ENCODE measurements at regions of chr11 and their contacts with region 1.

Region 1: DNA sequence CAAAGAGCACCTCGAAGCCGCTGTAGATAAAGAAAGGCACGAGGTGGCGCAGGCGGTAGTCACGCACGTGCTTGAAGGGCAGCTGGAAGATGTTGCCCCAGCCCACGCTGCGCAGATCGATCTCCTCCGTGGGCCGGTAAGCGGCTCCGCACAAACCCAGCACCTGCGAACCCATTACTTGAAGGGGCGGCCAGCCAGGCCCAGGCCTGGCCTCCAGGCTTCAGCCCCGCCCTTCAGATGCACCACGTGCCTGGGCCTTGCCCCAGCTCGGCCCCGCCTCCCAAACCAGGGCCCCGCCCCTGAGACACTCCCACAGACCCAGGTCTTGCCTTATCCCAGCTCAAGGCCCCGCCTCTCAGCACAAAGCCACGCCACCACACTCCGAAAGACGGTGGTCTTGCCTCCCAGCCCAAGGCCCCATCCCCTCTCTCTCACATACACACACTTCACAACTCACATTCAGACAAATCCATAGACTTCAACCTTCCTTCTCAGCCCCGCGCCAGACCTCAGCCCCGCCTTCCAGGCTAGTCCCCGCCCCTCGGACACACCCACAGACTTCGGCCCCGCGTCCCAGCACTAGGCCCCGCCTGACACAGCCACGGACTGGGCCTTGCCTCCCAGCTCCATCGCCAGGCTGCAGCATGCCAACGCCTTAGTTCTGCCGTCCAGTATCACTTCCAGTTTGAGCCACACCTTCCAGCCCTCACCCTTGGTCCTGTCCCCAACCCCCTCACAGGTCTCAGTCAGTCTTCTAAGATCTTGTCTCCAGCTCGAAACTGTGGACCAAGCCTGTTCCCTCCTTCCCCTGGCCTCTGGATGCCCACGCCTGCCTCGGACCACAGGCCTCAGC is 7.0 kb downstream of the UNC93B1 start:
- H3K4me3 Mint-ChIP-seq: peak overlapping the region; percentile 51
- H3K27ac Mint-ChIP-seq: peak overlapping the region; percentile 78
- H3K4me1 Mint-ChIP-seq: peaks cover 72% of the 10 kb centered on the region
- H3K27me3 Mint-ChIP-seq: peaks cover under 1% of the 10 kb centered on the region

Region 2: DNA sequence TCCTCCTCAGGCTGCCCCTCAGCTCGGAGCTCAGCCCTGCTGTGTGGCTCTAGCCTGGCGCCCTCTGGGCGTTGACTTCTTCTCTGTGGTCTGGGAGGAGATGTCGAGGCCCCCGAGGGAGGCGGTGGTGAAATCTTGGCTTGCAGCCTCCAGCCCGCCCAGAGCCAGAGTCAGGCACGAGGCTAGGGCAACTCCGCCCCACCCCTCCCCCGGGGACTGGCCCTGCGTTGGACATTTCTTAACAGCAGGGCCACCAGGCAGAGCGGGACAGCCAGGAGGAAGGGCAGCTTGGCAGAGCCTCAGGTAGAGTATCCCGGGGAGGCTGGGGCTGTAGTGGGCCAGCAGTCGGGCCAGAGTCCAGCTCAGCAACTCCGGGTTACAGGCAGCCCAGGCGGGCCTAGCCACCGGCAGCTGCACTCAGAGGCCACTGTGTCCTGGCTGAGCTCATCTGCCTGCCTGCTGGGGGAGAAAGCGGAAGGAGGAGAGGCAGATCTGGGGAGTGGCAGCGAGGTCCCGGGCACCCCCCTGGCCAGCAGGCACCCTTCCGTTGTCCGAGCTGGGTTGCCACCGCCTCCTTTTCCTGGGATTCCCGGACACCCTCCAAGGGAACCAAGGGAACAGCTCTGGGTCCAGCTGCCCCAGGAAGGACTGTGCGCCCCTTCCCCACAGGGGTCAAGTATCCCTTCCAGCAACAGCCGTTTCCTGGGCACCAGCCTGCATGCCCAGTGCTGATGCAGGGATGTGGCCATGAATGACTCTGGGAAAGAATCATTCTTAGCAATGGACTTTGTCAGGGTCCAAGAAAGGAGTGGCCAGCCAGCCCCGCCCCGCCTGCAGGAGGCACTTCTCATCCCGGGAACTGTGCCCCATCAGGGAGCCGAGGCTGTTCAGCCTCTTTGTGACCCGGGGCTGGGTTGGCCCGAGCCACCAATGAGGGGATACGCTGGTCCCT is 13.5 kb after region 1 on chr11 and contains the start of gene ALDH3B1:
- intact Hi-C with region 1: loop called (anchors 2 kb)
- H3K4me3 Mint-ChIP-seq: peak within 1 kb of the TSS; percentile 87
- H3K27ac Mint-ChIP-seq: peak within 1 kb of the TSS; percentile 99
- H3K4me1 Mint-ChIP-seq: peaks cover 91% of the 10 kb centered on the region
- H3K27me3 Mint-ChIP-seq: no peaks in the 10 kb centered on the region

Region 3: DNA sequence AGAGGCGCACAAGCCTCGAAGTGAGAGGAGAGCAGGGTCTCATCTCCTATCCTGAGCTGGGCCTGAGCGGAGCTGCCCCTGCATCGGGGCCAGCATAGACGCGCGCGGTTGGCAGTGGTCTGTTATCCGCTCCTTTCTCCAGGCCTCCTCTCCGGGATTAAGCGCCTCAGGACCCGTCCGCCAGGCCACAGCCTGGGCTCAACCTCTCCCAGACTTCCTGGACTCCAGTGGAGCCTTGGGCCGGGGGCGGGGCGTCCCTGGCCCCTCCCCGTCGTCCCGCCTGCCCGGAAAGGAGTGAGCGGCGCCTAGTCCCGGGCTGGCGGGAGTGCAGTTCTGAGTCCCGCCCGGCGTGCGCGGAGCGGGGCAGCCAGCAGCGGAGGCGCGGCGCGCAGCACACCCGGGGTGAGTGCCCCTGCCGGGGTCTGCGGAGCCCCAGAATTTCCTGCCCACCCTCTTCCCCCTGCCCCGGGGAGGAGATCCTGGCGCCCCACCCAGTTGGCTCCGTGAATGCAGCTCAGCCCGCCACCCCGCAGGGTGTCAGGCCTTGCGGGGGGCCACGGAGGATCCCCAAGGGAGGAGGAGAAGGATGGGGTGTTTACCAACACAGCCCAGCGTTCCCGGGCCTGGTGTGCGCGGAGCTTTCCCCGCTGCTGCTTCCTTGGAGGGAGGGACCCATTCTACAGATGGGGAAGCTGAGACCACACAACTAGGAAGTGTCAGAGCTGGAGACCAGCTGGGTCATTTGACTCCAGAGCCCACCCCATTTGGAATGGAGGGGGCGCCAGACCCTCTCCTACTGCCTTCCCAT is 42.1 kb after region 1 on chr11 and contains the start of gene TCIRG1:
- intact Hi-C with region 1: loop called (anchors 5 kb)
- H3K4me3 Mint-ChIP-seq: peak within 1 kb of the TSS; percentile 93
- H3K27ac Mint-ChIP-seq: peak within 1 kb of the TSS; percentile 97
- H3K4me1 Mint-ChIP-seq: peaks cover 73% of the 10 kb centered on the region
- H3K27me3 Mint-ChIP-seq: no peaks in the 10 kb centered on the region

Measured in dendritic cell treated with granulocyte-macrophage colony-stimulating factor and Interleukin-4, amounts not matched to agents 40 ng/mL and 50 ng/mL, for 4 days (primary cell).